PC-9 (cell line): ENCODE measurements at regions of chr10 and their contacts with region 1.

Region 1: DNA sequence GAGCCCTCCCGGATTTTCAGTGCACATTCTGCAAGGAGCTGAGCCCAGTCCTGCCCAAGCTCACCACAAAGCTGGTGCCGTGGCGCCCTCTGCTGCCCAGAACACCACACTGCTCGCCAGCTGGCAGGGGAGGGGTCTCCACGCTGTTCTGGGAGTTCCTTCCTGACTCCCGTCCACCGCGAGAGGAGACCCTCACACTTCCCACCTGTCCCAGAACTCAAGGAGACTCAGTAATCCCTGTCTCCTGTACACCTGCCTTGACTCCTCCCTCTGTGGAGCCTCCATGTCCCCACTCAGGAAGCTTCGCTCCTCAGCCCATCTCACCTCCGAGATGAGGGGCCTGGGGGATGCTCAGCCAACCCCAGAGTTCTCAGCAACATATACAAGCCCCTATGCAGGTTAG is 11.3 kb downstream of the C10orf105 start:
- DNase-seq: peak in 1 of 2 experiments; percentile 69
- H3K4me3 ChIP-seq: no peak overlapping the region
- H3K27ac ChIP-seq: no peak overlapping the region
- H3K4me1 ChIP-seq: peaks cover 6% of the 10 kb centered on the region; the same call in 1 of the 2 replicates
- H3K27me3 ChIP-seq: no peaks in the 10 kb centered on the region
- CTCF ChIP-seq: peak; percentile 97

Region 2: DNA sequence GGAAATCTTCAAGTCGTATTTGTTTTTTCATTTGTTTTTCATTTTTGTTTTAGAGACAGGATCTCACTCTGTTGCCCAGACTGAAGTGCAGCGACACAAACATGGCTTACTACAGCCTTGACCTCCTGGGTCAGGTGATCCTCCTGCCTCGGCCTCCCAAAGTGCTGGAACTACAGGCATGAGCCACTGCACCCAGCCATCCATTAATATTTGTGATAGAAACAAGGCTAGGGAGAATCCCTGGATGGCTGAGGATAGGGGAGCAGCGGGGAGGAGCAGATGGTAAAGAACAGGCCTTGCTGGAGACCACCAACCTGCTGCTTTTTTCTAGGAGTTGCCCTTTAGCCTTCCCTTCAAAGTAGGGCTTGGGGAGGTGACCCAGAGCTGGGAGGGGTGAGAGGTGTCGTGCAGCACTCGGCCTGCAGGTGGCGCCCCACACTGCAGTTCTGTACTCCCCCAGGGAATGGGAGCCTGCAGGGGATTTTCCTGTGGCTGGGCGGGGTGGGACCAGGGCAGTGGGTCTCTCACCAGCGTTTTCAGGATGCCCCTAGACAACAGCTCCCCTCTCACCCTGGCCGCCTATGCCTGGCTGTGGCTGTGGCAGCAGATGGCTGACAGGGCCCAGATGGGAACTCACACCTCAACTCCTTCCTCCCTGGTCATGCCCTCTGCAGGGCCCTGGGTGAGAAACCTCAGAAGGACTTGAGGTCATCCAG is 324.2 kb before region 1 on chr10:
- CTCF ChIA-PET with region 1: interaction called, 4 read pairs
- POLR2A ChIA-PET with region 1: no interaction called
- intact Hi-C with region 1: loop called (anchors 1 kb)
- DNase-seq: peak in 1 of 2 experiments; percentile 77
- H3K4me3 ChIP-seq: no peak overlapping the region
- H3K27ac ChIP-seq: no peak overlapping the region
- H3K4me1 ChIP-seq: peaks cover 8% of the 10 kb centered on the region
- H3K27me3 ChIP-seq: no peaks in the 10 kb centered on the region
- CTCF ChIP-seq: peak; percentile 98

Region 3: DNA sequence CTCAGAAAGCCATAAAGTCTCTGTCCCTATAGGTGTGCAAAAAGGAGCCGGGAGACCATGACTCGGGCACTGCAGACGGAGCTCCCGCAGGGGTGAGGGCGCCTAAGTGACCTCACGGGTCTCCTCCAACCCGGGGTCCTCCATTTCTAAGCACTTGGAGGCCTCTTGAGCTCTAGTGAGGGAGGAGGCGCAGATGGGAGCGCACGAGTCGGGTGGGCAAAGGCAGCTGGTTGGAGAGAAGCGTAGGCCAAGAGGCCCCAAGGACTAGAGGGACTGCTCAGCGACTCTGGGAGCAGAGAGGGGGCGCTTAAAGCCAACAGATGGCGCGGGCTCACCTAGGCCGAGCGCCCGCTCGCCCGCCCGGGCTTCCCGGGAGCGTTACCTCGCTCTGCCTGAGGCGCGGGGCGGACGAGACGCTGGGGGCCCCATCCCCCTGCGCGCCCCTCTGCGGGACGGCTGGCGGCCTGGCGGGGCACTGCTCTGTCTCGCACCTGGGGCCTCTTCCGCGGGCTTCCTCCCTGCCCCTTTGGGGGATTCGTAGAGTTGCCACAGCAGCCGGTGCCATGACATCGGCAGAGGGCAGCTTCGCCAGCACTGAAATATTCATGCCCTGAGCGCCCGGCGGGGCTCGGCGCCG is 312.1 kb before region 1 on chr10:
- CTCF ChIA-PET with region 1: no interaction called
- POLR2A ChIA-PET with region 1: no interaction called
- intact Hi-C with region 1: loop called (anchors 2 kb)
- DNase-seq: peak; percentile 49 to 70
- H3K4me3 ChIP-seq: peak overlapping the region; percentile 60
- H3K27ac ChIP-seq: no peak overlapping the region
- H3K4me1 ChIP-seq: peaks cover 41% of the 10 kb centered on the region
- H3K27me3 ChIP-seq: peaks cover 8% of the 10 kb centered on the region; the same call in 1 of the 2 replicates
- CTCF ChIP-seq: peak; percentile 57

Region 4: DNA sequence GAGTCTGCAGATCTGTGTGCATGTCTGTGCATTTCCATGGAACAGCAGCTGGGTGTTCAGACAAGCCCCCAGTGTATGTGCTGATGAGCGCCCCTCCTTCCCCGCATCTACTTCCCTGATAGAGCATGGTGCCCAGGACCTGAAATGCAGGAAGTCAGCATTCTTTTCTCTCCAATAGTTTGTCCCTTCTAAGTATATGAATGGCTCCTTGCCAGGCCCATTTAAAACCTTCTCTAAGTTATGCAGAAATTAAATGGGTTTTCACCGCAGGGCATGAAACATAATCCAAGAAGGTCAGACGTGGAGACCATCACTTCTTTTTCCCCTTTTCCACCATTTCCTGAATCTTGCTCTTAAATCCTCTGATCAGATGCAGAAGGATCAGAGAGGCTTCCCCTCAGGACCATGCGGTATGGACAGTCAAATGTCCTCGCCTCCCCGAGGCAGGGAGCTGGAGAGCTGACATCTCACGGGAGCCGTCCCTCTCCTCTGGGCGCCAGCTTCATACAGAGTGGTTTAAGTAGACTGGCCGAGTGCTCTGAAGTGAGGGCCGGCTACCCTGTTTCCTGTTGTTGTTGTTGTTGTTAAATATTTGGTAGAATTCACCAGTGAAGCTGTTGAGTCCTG is 144.0 kb before region 1 on chr10:
- CTCF ChIA-PET with region 1: interaction called, 6 read pairs
- POLR2A ChIA-PET with region 1: no interaction called
- intact Hi-C with region 1: loop called (anchors 2 kb)
- DNase-seq: no peak
- H3K4me3 ChIP-seq: no peak overlapping the region
- H3K27ac ChIP-seq: no peak overlapping the region
- H3K4me1 ChIP-seq: no peaks in the 10 kb centered on the region
- H3K27me3 ChIP-seq: no peaks in the 10 kb centered on the region
- CTCF ChIP-seq: no peak